Right ventricle myocardium inferior (tissue), 1 donor: ENCODE measurements at regions of chr4 and their contacts with region 1.

Region 1: DNA sequence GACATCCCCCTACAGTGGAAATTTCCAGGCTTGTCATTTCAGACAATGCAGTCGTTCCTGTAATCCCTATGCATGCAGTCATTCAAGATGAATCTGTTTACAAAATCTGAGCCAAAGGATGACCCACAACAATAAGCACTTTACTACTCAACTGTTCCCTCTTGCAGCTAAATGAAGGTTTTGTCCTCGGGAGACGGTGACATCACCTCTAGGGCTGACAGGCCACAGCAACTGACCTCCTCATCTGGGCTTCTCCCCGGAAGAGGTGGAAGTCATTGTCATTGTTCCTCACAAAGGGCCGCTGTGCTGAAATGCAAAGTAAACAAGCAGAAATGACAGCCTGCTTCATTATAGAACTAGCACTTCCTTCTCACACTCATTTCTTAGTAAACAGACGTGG is 29.2 kb downstream of the CLRN2 start:
- DNase-seq: no peak
- ATAC-seq: no peak

Region 2: DNA sequence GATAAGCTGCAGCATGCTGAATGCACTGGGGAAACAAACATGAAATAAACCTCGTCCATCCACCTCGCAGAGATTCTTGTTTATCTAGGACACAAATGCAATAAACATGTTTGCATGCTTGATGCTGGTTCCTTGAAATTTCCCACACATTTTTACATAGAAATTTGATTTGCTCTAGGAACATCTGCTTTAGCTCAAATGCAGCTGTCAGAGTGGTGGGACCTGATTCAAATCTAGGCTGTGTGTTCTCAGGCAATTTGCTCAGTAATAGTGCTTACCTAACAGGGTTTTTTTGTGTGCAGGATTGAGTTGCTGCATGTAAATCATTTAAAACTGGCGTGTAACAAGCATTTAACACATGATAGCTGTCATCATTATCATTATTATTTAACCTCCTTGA is 325.4 kb before region 1 on chr4:
- intact Hi-C with region 1: no loop called
- DNase-seq: no peak
- ATAC-seq: no peak

Region 3: DNA sequence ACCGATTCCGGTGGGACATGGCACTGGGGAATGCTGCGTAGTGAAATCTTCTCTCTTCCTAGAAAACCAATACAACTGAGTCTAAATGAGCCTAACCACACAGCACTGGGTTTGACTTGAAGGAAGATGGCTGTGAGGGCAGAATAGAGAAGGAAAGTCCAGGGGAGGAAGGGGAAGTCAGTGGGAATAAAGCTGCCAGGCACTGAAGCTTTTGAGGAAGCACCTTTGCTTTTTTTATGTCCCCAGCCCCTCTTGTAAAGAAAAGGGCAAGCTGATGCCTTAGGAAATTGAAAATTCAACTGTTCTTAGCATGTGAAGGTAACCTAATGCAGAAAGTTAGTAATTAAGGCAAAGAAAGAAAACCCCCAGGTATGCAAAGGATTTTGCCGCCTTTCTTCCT is 90.9 kb after region 1 on chr4:
- intact Hi-C with region 1: loop called (anchors 1 kb)
- DNase-seq: no peak
- ATAC-seq: no peak

Region 4: DNA sequence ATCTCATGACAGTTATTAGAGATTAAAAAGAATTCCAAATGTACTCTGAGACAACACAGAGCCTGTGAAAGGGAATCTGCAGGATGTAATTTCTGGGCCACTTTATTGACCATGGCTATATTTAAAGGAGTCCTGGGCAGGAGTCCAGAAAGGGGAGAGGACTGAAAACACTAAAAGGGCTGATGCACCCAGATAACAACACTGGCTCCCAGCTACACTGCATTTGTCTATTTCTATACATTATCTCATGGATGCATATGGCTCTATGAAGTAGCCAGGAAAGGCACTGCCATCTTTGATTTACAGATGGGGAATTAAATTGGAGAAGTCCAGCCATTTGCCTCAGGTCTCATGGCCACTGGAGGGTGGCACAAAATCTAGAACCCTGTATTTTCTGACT is 126.2 kb after region 1 on chr4:
- intact Hi-C with region 1: no loop called
- DNase-seq: no peak
- ATAC-seq: no peak

Region 5: DNA sequence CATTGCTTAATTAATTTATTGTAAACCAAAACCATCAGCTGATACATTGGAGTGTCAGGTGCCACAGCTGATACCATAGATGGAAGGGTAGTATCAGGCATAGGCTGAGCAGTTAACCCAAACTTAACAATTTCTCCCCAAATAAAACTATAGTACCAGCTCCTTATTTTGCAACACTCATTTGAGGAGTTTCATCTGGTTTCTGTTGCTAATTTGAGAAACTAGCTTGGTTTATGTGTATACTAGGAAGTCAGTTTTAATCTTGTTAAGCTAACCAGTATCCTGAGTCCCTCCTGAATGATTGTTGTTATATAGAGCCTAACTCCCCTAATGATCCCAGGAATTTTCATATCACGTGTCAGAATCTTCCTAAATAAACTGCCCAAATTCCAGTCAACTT is 253.6 kb after region 1 on chr4:
- intact Hi-C with region 1: no loop called
- DNase-seq: no peak
- ATAC-seq: no peak